Cardiac septum (tissue), 1 donor: ENCODE measurements at regions of chr9 and their contacts with region 1.

Region 1: DNA sequence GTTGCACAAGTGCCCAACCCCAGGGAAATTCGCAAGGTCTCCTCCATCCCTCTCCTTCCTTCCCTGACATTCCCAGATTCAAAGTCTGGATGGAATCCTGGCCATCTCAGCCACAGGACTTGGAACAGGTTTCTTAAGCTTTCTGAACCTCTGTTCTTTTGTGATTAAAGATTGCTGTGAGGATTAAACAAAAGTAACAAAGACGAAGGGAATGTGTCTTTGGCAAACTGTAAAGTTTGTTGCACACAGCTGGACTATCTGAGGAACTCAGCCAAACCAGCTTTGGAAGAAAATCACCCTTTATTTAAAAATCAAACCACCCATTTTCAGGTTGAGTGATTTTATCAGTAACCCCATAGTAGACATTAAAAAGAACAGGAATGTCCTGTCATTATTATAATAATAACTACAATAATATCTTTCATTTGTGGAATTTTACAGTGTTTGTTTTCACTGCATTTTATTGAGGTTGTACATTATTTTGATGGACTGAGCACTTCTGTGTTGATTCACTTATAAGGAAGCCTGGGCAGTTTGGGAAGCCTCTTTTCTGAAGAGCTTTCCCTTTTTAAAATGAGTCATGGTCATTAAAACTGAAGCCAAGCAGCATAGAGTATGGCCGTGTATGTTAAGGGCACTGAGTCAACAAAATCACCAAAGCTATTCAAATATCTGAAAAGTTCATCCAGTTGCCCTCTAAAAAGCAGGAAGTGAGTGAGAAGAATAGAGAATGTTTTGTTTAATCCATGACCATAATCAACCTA is 310.2 kb downstream of the AGTPBP1 start:
- DNase-seq: no peak

Region 2: DNA sequence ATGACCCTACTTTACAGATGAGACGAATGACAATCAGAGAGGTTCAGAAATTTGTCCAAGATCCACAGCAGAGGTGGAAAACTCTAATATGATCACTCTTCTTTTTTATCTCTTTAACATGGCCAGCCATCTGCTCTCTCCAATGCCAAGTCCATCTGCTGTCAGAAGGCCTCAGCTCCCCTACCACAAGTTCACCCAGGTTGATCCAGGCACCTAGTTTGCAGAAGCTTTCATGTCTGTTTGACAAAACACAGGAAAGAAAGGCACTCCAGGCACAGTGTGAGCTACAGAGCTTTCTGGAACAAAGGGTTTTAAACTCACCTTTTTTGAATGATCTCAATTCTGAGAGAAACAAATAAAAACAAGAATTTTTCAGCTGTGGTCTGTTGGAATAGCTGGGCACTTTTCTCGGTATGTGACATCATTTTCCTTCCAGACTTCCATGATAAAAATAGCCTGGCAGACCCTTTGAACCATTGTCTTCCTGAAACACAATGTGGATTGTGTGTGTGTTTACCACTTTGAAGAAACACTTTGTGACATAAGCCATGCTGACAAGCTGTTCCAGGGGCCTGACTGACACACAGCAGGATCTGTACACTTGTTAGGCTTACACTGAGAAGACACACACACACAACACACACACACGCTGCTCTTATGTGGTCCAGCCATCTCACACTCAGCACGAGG is 96.0 kb after region 1 on chr9:
- intact Hi-C with region 1: loop called (anchors 2 kb)
- DNase-seq: no peak